ENCODE measurements at regions of chr10 and their contacts with region 1.

Region 1: GRCh38 chr10:71835671-71836595 is 15.1 kb downstream of the PSAP start:
- DNase-seq: no peak
- ATAC-seq: no peak
- H3K4me3 Mint-ChIP-seq: no peak overlapping the region
- H3K27ac Mint-ChIP-seq: peak overlapping the region; percentile 96
- H3K4me1 Mint-ChIP-seq: peaks cover 48% of the 10 kb centered on the region
- H3K27me3 Mint-ChIP-seq: no peaks in the 10 kb centered on the region
- CTCF ChIP-seq: no peak

Region 2: DNA sequence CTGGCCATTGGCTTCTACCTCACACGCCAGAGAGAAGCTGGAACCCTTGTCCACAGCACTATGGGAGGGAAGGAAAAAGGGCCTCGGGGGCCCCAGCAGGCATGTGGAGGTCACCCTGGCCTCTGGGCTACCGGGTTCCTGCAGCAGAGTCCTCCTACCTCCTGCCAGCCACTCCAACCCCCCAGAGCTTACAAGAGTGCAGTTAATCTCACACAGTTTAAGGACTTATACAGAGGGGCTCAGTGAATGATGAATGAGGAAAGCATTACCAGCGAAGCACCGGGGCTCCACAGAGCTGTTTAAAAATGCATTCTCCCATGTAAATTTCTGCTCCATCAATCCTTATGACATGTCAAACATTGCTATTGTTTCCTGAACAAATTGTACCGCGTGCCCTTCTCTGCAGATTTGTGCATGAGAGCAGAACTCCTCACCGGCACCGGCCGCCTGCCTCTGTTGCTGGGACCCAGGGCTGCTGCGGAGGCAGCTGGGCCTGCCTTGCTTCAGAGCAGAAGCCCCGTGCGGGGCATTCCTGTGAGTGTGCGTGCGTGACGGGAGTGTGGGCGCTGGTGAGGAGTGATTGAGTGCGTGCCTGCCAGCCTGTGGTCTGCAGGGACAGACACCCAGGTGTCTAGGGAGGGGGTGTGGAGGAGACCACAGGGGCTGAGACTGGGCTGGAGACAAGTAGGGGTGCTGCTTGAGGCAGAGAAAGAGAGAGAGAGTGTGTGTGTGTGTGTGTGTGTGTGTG is 169.1 kb before region 1 on chr10:
- CTCF ChIA-PET with region 1: no interaction called
- POLR2A ChIA-PET with region 1: no interaction called
- DNase-seq: no peak
- ATAC-seq: no peak
- H3K4me3 Mint-ChIP-seq: no peak overlapping the region
- H3K27ac Mint-ChIP-seq: no peak overlapping the region
- H3K4me1 Mint-ChIP-seq: peaks cover 37% of the 10 kb centered on the region
- H3K27me3 Mint-ChIP-seq: peaks cover 14% of the 10 kb centered on the region; the same call in 1 of the 2 replicates
- CTCF ChIP-seq: no peak

Region 3: GRCh38 chr10:71850637-71851464 is 14.9 kb after region 1 on chr10 and contains the start of gene PSAP:
- CTCF ChIA-PET with region 1: interaction called, 17 read pairs
- POLR2A ChIA-PET with region 1: interaction called, 12 read pairs
- DNase-seq: peak; percentile 98
- ATAC-seq: peak; percentile 97
- H3K4me3 Mint-ChIP-seq: peak within 1 kb of the TSS; percentile 96
- H3K27ac Mint-ChIP-seq: peak within 1 kb of the TSS; percentile 94
- H3K4me1 Mint-ChIP-seq: peaks cover 40% of the 10 kb centered on the region
- H3K27me3 Mint-ChIP-seq: no peaks in the 10 kb centered on the region
- CTCF ChIP-seq: no peak
- total RNA-seq, gene PSAP: 397 to 474 TPM (median 462 TPM) in 3 replicates

Region 4: GRCh38 chr10:71889388-71889987 is 53.6 kb after region 1 on chr10:
- CTCF ChIA-PET with region 1: interaction called, 133 read pairs
- POLR2A ChIA-PET with region 1: interaction called, 9 read pairs
- DNase-seq: no peak
- ATAC-seq: peak; percentile 40
- H3K4me3 Mint-ChIP-seq: peak overlapping the region; percentile 73
- H3K27ac Mint-ChIP-seq: no peak overlapping the region
- H3K4me1 Mint-ChIP-seq: peaks cover 9% of the 10 kb centered on the region
- H3K27me3 Mint-ChIP-seq: peaks cover 44% of the 10 kb centered on the region
- CTCF ChIP-seq: no peak

Region 5: DNA sequence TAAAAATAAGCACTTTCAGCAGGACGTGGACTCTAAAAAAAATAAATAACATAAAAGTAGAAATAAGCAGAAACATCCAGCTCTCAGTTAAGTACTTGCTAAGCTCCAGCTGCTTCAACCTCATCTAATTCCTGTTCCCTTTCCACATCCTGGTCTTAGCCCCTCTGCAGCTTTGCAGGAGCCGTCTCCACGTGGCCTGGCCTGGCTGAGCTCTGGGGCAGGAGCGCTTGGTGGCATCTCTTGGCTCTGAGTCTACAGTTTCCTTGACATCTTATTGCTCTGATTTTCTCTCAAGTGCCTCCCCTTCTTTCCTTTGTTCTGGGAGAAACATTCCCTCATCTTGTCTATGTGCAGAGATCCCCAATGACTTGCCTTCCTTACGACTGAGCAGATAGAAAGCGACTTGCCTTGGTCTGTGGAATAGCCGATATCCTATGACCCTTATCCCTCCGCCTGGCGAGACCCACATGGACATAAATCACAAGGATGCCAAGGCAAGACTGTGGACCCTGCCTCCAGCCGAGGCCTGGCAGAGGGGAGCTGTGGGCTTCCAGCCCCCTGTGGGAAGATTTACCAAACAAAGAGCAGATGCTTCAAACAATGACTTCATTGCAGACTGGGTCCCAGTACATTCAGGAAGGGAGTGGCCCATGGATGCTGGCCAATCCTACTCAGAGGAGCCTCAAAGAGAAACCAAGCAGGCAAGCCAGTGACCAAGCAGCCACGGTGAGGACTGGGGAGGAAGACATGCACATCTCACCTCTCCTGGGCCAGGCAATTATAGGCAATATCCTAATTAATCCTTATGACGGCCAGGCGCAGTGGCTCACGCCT is 190.6 kb after region 1 on chr10:
- CTCF ChIA-PET with region 1: no interaction called
- POLR2A ChIA-PET with region 1: no interaction called
- DNase-seq: no peak
- ATAC-seq: no peak
- H3K4me3 Mint-ChIP-seq: no peak overlapping the region
- H3K27ac Mint-ChIP-seq: no peak overlapping the region
- H3K4me1 Mint-ChIP-seq: no peaks in the 10 kb centered on the region
- H3K27me3 Mint-ChIP-seq: no peaks in the 10 kb centered on the region; the same call in 1 of the 2 replicates
- CTCF ChIP-seq: no peak

Measured in WTC11 (cell line).